Calu3 (cell line): ENCODE measurements at regions of chrX and their contacts with region 1.

Region 1: DNA sequence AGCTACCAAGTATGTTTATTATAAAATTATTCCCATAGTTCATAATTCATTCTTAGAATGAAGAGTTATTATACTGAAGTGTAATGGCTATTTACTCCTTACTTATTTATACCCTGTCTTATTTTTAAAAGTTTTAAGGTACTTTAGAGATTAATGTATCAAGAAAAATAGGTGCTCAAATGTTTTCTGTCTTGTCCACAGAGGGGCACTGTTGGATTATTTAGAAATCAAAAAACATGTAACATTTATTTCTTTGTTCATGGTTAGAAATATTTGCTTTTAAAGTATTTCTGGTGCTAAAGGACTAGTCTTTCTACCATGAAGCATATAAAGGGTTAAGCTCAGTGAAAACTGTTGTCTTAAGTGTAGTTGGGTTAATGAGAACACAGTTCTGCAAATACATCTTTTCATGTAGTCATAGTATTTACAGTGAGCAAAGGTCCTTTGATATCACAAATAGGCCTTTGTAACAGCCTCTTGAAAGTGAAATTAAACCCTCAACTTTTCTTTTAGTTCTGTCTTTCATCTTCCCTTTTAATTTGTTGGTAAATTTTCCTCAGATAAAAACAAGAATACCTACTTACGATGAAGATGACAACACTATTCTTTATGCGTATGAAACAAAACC is 7.7 kb downstream of the SCML1 start:
- DNase-seq: no peak
- H3K4me3 Mint-ChIP-seq: peak overlapping the region; percentile 12
- H3K27ac Mint-ChIP-seq: no peak overlapping the region
- H3K4me1 Mint-ChIP-seq: peaks cover 18% of the 10 kb centered on the region
- H3K27me3 Mint-ChIP-seq: no peaks in the 10 kb centered on the region
- CTCF ChIP-seq: peak; percentile 17

Region 2: GRCh38 chrX:17876164-17876563 is 131.2 kb after region 1 on chrX:
- CTCF ChIA-PET with region 1: no interaction called
- intact Hi-C with region 1: loop called (anchors 10 kb)
- DNase-seq: no peak
- H3K4me3 Mint-ChIP-seq: no peak overlapping the region
- H3K27ac Mint-ChIP-seq: no peak overlapping the region
- H3K4me1 Mint-ChIP-seq: no peaks in the 10 kb centered on the region
- H3K27me3 Mint-ChIP-seq: peaks cover 83% of the 10 kb centered on the region
- CTCF ChIP-seq: no peak